Activated CD4-positive, alpha-beta memory T cell treated with anti-CD3 and anti-CD28 coated beads, Interleukin-2, amount 10 ng/mL, durations not matched to agents 7 days and 5 days (primary cell): ENCODE measurements at regions of chr1 and their contacts with region 1.

Region 1: GRCh38 chr1:8878448-8879347 is at the start of gene ENO1:
- DNase-seq: peak; percentile 99
- H3K4me3 Mint-ChIP-seq: peak within 1 kb of the TSS; percentile 99
- H3K27ac Mint-ChIP-seq: peak within 1 kb of the TSS; percentile 99
- H3K4me1 Mint-ChIP-seq: peaks cover 44% of the 10 kb centered on the region
- H3K27me3 Mint-ChIP-seq: no peaks in the 10 kb centered on the region
- total RNA-seq, gene ENO1: 2,453 to 2,472 TPM

Region 2: DNA sequence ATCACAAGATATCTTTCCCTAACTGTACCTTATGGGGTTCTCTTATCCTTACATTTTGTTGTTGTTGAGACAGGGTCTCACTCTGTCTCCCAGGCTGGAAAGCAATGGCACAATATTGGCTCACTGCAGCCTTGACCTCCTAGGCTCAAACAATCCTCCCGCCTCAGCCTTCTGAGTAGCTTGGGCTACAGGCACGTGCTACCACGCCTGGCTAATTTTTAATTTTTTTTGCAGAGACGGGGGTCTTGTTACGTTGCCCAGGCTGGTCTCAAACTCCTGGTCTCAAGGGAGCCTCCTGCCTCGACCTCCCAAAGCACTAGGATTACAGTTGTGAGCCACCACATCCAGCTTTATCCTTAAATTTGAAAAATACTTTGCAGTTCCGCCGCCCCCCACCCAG is 71.7 kb before region 1 on chr1:
- CTCF ChIA-PET with region 1: no interaction called
- POLR2A ChIA-PET with region 1: no interaction called
- DNase-seq: no peak
- H3K4me3 Mint-ChIP-seq: no peak overlapping the region
- H3K27ac Mint-ChIP-seq: no peak overlapping the region
- H3K4me1 Mint-ChIP-seq: peaks cover 1% of the 10 kb centered on the region
- H3K27me3 Mint-ChIP-seq: no peaks in the 10 kb centered on the region

Region 3: GRCh38 chr1:8817406-8818324 is 61.0 kb before region 1 on chr1 and contains the start of gene RERE:
- CTCF ChIA-PET with region 1: no interaction called
- POLR2A ChIA-PET with region 1: interaction called, 26 read pairs
- DNase-seq: peak; percentile 97
- H3K4me3 Mint-ChIP-seq: peak within 1 kb of the TSS; percentile 82
- H3K27ac Mint-ChIP-seq: peak within 1 kb of the TSS; percentile 75
- H3K4me1 Mint-ChIP-seq: peaks cover 48% of the 10 kb centered on the region
- H3K27me3 Mint-ChIP-seq: peaks cover 7% of the 10 kb centered on the region
- total RNA-seq, gene RERE: 96.6 to 101 TPM

Region 4: DNA sequence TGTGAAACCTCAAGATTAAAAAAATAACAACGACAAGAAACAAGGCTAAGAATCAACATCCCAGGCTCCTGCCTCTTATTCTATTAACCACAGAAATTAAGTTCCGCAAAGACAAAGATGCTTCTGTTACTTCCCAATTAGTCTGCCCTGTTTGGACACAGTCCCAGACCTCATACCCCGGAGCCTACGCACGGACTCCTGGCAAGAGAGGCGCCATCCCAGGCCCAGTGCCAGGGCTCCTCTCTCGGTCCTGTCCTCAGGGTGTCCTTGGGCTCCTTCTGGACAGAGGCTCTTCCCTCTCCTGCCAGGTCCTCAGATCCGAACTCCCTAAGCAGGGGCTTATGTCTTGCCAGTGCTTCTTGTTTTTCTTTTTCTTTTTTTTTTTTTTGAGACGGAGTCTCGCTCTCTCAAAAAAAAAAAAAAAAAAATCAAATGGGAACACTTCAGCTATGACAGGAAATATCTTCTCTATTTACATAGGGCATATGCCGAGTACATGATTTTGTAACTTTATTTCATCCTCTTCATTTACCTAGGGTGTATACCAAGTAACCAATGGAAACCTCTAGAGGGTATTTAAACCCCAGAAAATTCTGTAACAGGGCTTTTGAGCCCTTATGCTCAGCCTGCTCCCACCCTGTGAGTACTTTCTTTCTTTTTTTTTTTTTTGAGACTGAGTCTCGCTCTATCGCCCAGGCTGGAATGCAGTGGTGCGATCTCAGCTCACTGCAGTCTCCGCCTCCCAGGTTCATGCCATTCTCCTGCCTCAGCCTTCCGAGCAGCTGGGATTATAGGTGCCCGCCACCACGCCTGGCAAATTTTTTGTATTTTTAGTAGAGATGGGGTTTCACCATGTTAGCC is 11.5 kb after region 1 on chr1:
- CTCF ChIA-PET with region 1: interaction called, 3 read pairs
- POLR2A ChIA-PET with region 1: interaction called, 17 read pairs
- DNase-seq: no peak
- H3K4me3 Mint-ChIP-seq: no peak overlapping the region
- H3K27ac Mint-ChIP-seq: no peak overlapping the region
- H3K4me1 Mint-ChIP-seq: peaks cover 8% of the 10 kb centered on the region
- H3K27me3 Mint-ChIP-seq: peaks cover 4% of the 10 kb centered on the region

Region 5: DNA sequence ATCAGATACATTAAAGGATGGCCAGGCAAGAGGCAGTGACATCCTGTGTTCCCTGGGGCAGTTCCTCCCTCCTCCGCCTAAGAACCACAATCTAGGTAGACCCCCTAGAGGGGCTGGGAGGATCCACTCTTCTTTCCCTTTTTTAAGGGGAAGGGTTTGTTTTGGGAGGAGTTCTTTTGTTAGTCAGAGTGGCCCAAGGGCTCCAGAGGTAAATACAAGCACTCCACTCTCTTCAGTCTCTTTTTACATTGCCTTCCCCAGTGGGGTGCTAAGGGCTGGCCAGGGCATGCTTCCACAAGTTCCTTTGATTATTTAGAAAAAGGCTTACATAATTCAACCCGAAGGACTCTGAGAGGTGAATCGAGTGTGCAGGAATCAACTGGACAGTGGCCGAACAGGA is 32.7 kb after region 1 on chr1:
- CTCF ChIA-PET with region 1: interaction called, 4 read pairs
- POLR2A ChIA-PET with region 1: interaction called, 18 read pairs
- DNase-seq: no peak
- H3K4me3 Mint-ChIP-seq: no peak overlapping the region
- H3K27ac Mint-ChIP-seq: no peak overlapping the region
- H3K4me1 Mint-ChIP-seq: peaks cover 16% of the 10 kb centered on the region
- H3K27me3 Mint-ChIP-seq: peaks cover 17% of the 10 kb centered on the region

Region 6: DNA sequence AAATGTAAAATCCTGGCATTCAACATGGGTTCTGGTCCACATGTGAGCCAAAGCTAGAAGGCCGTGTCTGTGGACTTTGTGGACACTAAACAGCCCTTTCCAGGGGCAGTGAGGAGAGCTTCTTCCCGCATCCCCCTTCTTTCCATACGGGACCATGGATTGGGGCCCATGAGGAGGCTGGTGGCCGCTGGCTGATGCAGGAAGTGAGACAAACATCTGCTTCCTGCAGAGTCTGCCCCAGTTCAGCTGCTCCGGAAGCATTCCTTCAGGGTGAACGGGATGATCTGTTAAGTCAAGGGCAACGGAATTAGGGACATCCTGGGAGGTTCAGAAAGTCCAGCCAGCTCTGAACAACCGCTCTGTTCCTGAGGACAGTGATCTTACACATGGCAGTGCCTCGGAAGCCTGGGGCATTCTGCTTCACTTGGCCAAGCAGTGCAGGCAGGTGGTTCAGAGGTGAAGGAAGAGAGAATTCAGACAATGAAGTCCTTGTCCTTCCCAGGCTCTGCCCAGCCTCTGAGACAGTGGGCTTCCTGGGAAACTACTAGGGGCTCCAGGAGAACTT is 68.5 kb after region 1 on chr1:
- CTCF ChIA-PET with region 1: interaction called, 3 read pairs
- POLR2A ChIA-PET with region 1: interaction called, 38 read pairs
- DNase-seq: peak; percentile 37
- H3K4me3 Mint-ChIP-seq: no peak overlapping the region
- H3K27ac Mint-ChIP-seq: peak overlapping the region; percentile 99
- H3K4me1 Mint-ChIP-seq: peaks cover 84% of the 10 kb centered on the region
- H3K27me3 Mint-ChIP-seq: no peaks in the 10 kb centered on the region

Region 7: GRCh38 chr1:8987881-8988617 is 109.4 kb after region 1 on chr1:
- CTCF ChIA-PET with region 1: interaction called, 7 read pairs
- POLR2A ChIA-PET with region 1: interaction called, 30 read pairs
- DNase-seq: peak; percentile 76
- H3K4me3 Mint-ChIP-seq: peak overlapping the region; percentile 7
- H3K27ac Mint-ChIP-seq: peak overlapping the region; percentile 72
- H3K4me1 Mint-ChIP-seq: peaks cover 56% of the 10 kb centered on the region
- H3K27me3 Mint-ChIP-seq: peaks cover 5% of the 10 kb centered on the region